Right cardiac atrium (tissue), 5 donors: ENCODE measurements at regions of chr13 and their contacts with region 1.

Region 1: DNA sequence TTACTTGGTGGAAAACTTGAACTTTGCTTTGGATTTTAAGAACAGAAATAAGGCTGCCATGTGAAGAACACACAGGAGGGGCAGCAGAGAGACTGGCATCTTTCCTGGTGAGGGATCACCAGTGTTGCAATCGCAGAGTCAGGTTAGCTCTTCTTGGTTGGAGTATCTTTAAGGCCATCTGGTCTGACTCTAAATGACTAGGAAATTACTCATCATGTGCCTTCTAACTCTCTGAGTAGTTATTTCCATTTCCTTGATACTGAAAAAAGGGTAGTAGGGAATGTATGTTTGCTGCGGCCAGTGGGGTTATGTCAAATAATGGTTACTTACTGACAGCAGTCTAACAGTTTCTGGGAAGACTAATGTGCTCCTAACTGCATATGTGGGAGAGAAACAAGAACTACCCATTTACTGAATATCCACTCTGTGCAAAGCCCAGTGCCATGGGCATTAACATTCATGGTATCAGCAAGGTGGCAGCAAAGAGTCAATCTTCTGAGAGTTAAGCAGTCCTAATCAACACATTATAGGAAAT is 122.1 kb downstream of the COG6 start:
- DNase-seq: no peak
- ATAC-seq: peak in 1 of 2 donors; percentile 66
- H3K4me3 ChIP-seq: no peak overlapping the region
- H3K27ac ChIP-seq: no peak overlapping the region
- H3K4me1 ChIP-seq: peaks cover 2% of the 10 kb centered on the region
- H3K27me3 ChIP-seq: no peaks in the 10 kb centered on the region

Region 2: GRCh38 chr13:39510316-39510695 is 267.3 kb before region 1 on chr13:
- intact Hi-C with region 1: no loop called
- DNase-seq: no peak
- ATAC-seq: no peak
- H3K4me3 ChIP-seq: no peak overlapping the region
- H3K27ac ChIP-seq: no peak overlapping the region
- H3K4me1 ChIP-seq: peaks cover 2% of the 10 kb centered on the region
- H3K27me3 ChIP-seq: no peaks in the 10 kb centered on the region

Region 3: GRCh38 chr13:39655569-39656324 is 121.8 kb before region 1 on chr13 and contains the start of gene COG6:
- intact Hi-C with region 1: no loop called
- DNase-seq: peak; percentile 92 to 97 (median 97)
- ATAC-seq: peak; percentile 98 to 99
- H3K4me3 ChIP-seq: peak within 1 kb of the TSS; percentile 76
- H3K27ac ChIP-seq: peak within 1 kb of the TSS; percentile 53
- H3K4me1 ChIP-seq: peaks cover 1% of the 10 kb centered on the region
- H3K27me3 ChIP-seq: no peaks in the 10 kb centered on the region
- total RNA-seq, gene COG6: 28.0 to 34.4 (median 31.3) TPM

Region 4: GRCh38 chr13:39876258-39876657 is 98.7 kb after region 1 on chr13:
- intact Hi-C with region 1: loop called in 1 of 4 experiments (anchors 10 kb)
- DNase-seq: no peak
- ATAC-seq: peak in 1 of 2 donors; percentile 34
- H3K4me3 ChIP-seq: no peak overlapping the region
- H3K27ac ChIP-seq: peak overlapping the region; percentile 38
- H3K4me1 ChIP-seq: peaks cover 10% of the 10 kb centered on the region
- H3K27me3 ChIP-seq: no peaks in the 10 kb centered on the region

Region 5: DNA sequence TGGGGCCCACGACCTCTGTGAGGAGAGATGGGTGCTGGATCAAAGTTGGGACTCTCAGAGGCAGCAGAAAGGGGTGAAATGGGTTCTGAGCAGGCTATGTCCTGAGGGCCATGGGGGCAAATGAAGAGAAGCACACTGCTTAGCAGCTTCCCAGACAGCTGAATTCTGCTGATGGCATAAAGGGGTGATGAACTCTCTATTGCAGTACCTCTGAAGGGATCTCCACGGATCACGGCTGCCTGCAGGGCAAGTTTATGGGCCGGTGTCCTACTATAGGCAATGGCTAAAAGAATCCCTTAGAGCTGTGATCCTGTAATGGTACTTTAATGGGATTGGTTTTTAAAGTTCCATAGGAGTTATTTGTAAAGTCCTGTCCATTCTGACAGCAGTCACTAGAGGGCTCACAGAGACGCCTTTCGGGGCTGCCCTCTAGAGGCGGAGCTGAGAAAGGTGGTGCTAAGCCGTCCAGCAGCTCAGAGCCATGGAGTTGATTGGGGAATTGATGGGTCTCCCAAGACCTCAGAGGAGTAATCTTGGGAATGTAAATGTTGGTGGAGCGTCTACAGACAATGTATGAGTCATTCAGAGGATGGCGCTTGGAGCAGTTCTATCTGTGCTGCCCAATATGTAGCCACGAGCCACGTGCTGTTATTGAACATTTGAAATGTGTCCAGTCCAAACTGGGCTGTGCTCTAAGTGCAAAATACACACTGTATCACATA is 165.1 kb after region 1 on chr13:
- intact Hi-C with region 1: loop called in 1 of 4 experiments (anchors 10 kb)
- DNase-seq: peak; percentile 74 to 85 (median 81)
- ATAC-seq: peak; percentile 91 to 92
- H3K4me3 ChIP-seq: no peak overlapping the region
- H3K27ac ChIP-seq: no peak overlapping the region
- H3K4me1 ChIP-seq: peaks cover 3% of the 10 kb centered on the region
- H3K27me3 ChIP-seq: no peaks in the 10 kb centered on the region

Region 6: DNA sequence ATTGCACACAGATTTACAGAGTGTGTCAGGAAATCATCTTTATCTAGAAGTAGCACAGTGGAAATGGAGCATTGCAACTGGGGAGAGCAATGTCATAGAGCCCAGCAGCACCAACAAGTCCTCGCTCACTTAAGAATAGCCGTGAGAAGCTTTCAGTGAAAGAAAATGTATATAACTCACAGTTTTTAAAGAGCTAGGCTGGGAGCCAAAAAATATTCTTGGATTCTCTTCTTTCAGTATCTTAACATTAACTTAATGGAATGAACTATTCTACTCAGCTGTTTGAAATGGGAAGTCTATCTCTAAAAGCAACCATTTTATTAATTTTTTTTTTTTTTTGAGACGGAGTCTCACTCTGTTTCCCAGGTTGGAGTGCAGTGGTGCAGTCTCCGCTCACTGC is 207.5 kb after region 1 on chr13:
- intact Hi-C with region 1: no loop called
- DNase-seq: no peak
- ATAC-seq: no peak
- H3K4me3 ChIP-seq: no peak overlapping the region
- H3K27ac ChIP-seq: no peak overlapping the region
- H3K4me1 ChIP-seq: no peaks in the 10 kb centered on the region
- H3K27me3 ChIP-seq: no peaks in the 10 kb centered on the region

Region 7: GRCh38 chr13:40190641-40191100 is 413.1 kb after region 1 on chr13:
- intact Hi-C with region 1: loop called in 1 of 4 experiments (anchors 10 kb)
- DNase-seq: peak; percentile 51 to 75 (median 54)
- ATAC-seq: peak; percentile 59 to 66
- H3K4me3 ChIP-seq: no peak overlapping the region
- H3K27ac ChIP-seq: peak overlapping the region; percentile 47
- H3K4me1 ChIP-seq: peaks cover 9% of the 10 kb centered on the region
- H3K27me3 ChIP-seq: no peaks in the 10 kb centered on the region